ENCODE measurements at regions of chr1 and their contacts with region 1.

Region 1: GRCh38 chr1:186680245-186681061 is at the start of gene PTGS2:
- DNase-seq: peak; percentile 96
- H3K4me3 ChIP-seq: peak within 1 kb of the TSS; percentile 80 to 99 (median 87)
- H3K27ac ChIP-seq: peak within 1 kb of the TSS; percentile 91
- H3K4me1 ChIP-seq: peaks cover 26% of the 10 kb centered on the region
- H3K27me3 ChIP-seq: no peaks in the 10 kb centered on the region
- CTCF ChIP-seq: peak; percentile 51 to 77
- POLR2A ChIP-seq: peak; percentile 77
- total RNA-seq, gene PTGS2: 21.6 and 24.1 TPM in 2 replicates

Region 2: GRCh38 chr1:186183970-186184628 is 496.4 kb before region 1 on chr1:
- CTCF ChIA-PET with region 1: no interaction called
- POLR2A ChIA-PET with region 1: no interaction called
- dilution Hi-C with region 1: no loop called
- intact Hi-C with region 1: no loop called
- DNase-seq: no peak
- H3K4me3 ChIP-seq: no peak overlapping the region
- H3K27ac ChIP-seq: no peak overlapping the region
- H3K4me1 ChIP-seq: peaks cover 21% of the 10 kb centered on the region
- H3K27me3 ChIP-seq: no peaks in the 10 kb centered on the region
- CTCF ChIP-seq: no peak
- POLR2A ChIP-seq: no peak

Region 3: DNA sequence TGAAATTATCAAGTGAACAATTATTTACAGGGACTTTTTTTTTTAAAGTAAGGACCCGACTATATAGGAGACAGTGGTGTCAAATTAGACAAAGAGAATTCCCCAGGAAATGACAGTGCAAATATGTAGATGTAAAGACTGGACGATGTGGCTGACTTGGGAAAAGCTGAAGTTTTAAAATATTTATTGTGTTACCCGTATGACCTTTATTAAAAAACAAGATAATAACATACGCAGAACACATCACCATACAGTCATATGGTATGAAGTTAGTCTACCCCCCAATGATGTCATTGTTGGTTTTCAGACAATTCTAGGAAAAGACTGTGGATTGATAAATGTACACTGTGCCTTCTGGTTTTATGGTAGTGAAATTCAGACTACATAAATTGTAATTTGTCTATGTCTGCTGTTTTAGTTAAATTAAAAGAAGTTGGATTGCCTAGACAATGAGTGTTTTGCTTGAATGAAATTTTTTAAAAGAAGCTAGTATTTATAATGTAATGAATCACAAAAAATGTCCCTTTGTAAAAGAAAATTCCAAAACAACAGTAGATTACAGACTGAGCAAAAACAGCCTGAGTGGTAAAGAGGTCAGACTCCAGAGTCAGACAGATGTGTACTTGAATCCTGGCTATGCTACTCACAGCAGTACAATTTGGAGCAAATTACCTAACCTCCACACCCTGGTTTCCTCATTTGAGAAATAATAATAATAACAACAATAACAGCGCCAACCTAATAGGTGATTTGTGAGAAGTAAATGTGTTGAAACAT is 204.0 kb before region 1 on chr1:
- CTCF ChIA-PET with region 1: interaction called, 5 read pairs
- POLR2A ChIA-PET with region 1: interaction called, 4 read pairs
- dilution Hi-C with region 1: no loop called
- intact Hi-C with region 1: loop called (anchors 1 kb)
- DNase-seq: peak; percentile 95
- H3K4me3 ChIP-seq: peak overlapping the region in 1 of 3 experiments; percentile 15
- H3K27ac ChIP-seq: peak overlapping the region; percentile 95
- H3K4me1 ChIP-seq: peaks cover 24% of the 10 kb centered on the region
- H3K27me3 ChIP-seq: no peaks in the 10 kb centered on the region
- CTCF ChIP-seq: no peak
- POLR2A ChIP-seq: no peak

Region 4: DNA sequence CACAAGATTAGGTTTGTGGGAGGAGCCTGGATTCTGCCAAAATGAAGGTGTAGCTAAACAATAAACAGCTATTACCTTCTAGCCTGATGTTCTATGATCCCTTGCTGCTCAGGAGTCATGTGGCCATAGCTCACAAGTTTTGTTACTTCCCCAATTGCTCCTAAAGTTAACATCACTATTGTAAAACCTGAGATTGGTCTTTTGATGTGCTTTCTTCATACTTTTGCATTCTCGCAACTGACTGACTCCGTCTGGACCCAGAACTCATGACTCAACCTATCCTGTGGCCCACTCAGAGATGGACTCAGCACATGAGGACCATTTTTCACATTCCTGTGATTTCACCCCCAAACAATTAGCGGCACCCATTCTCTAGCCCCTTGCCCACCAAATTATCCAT is 69.3 kb before region 1 on chr1:
- CTCF ChIA-PET with region 1: interaction called, 51 read pairs
- POLR2A ChIA-PET with region 1: interaction called, 3 read pairs
- dilution Hi-C with region 1: no loop called
- intact Hi-C with region 1: no loop called
- DNase-seq: no peak
- H3K4me3 ChIP-seq: no peak overlapping the region
- H3K27ac ChIP-seq: no peak overlapping the region
- H3K4me1 ChIP-seq: no peaks in the 10 kb centered on the region
- H3K27me3 ChIP-seq: no peaks in the 10 kb centered on the region
- CTCF ChIP-seq: no peak
- POLR2A ChIP-seq: no peak

Region 5: GRCh38 chr1:186763107-186763506 is 82.7 kb after region 1 on chr1:
- CTCF ChIA-PET with region 1: interaction called, 7 read pairs
- POLR2A ChIA-PET with region 1: no interaction called
- dilution Hi-C with region 1: no loop called
- intact Hi-C with region 1: loop called (anchors 2 kb)
- DNase-seq: peak; percentile 96
- H3K4me3 ChIP-seq: no peak overlapping the region
- H3K27ac ChIP-seq: peak overlapping the region; percentile 92
- H3K4me1 ChIP-seq: peaks cover 20% of the 10 kb centered on the region
- H3K27me3 ChIP-seq: no peaks in the 10 kb centered on the region
- CTCF ChIP-seq: no peak
- POLR2A ChIP-seq: no peak

Region 6: GRCh38 chr1:186839041-186839400 is 158.6 kb after region 1 on chr1:
- CTCF ChIA-PET with region 1: no interaction called
- POLR2A ChIA-PET with region 1: no interaction called
- dilution Hi-C with region 1: no loop called
- intact Hi-C with region 1: loop called (anchors 1 kb)
- DNase-seq: no peak
- H3K4me3 ChIP-seq: no peak overlapping the region
- H3K27ac ChIP-seq: no peak overlapping the region
- H3K4me1 ChIP-seq: peaks cover 10% of the 10 kb centered on the region
- H3K27me3 ChIP-seq: no peaks in the 10 kb centered on the region
- CTCF ChIP-seq: no peak
- POLR2A ChIP-seq: no peak

Region 7: DNA sequence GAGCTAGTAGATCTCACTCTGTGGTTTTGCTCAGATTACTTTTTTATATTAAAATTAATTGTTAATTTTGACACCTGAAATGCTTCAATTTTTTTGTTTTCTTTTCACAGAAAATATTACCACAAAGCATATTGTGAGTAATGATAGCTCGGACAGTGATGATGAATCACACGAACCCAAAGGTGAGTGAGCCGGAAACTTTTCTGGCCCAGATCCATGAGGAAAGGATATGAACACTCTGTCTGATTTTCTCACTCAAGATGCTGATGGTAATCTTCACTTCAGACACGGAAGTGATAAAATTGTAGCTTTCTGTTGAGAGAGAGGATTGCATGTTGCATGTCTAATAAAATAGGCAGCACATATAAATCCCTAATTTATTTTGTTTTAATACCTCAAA is 270.1 kb after region 1 on chr1:
- CTCF ChIA-PET with region 1: interaction called, 3 read pairs
- POLR2A ChIA-PET with region 1: interaction called, 3 read pairs
- dilution Hi-C with region 1: no loop called
- intact Hi-C with region 1: loop called (anchors 1 kb)
- DNase-seq: peak; percentile 89
- H3K4me3 ChIP-seq: no peak overlapping the region
- H3K27ac ChIP-seq: peak overlapping the region; percentile 97
- H3K4me1 ChIP-seq: peaks cover 58% of the 10 kb centered on the region
- H3K27me3 ChIP-seq: no peaks in the 10 kb centered on the region
- CTCF ChIP-seq: no peak
- POLR2A ChIP-seq: no peak